Aorta (tissue), 5 donors: ENCODE measurements at regions of chr9 and their contacts with region 1.

Region 1: GRCh38 chr9:94110821-94111252 is 26.6 kb downstream of the PTPDC1 start:
- DNase-seq: no peak
- ATAC-seq: no peak
- H3K4me3 ChIP-seq: no peak overlapping the region
- H3K27ac ChIP-seq: no peak overlapping the region
- H3K4me1 ChIP-seq: peaks cover 0 to 1% of the 10 kb centered on the region in 2 donors
- H3K27me3 ChIP-seq: no peaks in the 10 kb centered on the region

Region 2: GRCh38 chr9:94076557-94076956 is 34.3 kb before region 1 on chr9:
- intact Hi-C with region 1: loop called in 1 of 2 experiments (anchors 5 kb)
- DNase-seq: no peak
- ATAC-seq: no peak
- H3K4me3 ChIP-seq: no peak overlapping the region
- H3K27ac ChIP-seq: no peak overlapping the region
- H3K4me1 ChIP-seq: no peaks in the 10 kb centered on the region
- H3K27me3 ChIP-seq: no peaks in the 10 kb centered on the region